A549 (cell line): ENCODE measurements at regions of chr10 and their contacts with region 1.

Region 1: GRCh38 chr10:125719146-125720001 is at the start of gene EDRF1:
- DNase-seq: peak; percentile 91 to 99
- ATAC-seq: peak; percentile 96 to 97
- H3K4me3 ChIP-seq: peak within 1 kb of the TSS; percentile 84
- H3K27ac ChIP-seq: peak within 1 kb of the TSS; percentile 88 to 95
- H3K4me1 ChIP-seq: peaks cover 11% of the 10 kb centered on the region; the same call in 2 of the 3 replicates
- CTCF ChIP-seq: no peak
- EP300 ChIP-seq: no peak
- POLR2A ChIP-seq: peak; percentile 96
- RAD21 ChIP-seq: no peak
- polyA plus RNA-seq, gene EDRF1: 31.1 and 37.9 TPM in 2 replicates

Region 2: GRCh38 chr10:125707541-125708468 is 11.6 kb before region 1 on chr10:
- CTCF ChIA-PET with region 1: no interaction called
- POLR2A ChIA-PET with region 1: interaction called, 20 read pairs
- DNase-seq: peak; percentile 50 to 80
- ATAC-seq: peak; percentile 87 to 96
- H3K4me3 ChIP-seq: no peak overlapping the region
- H3K27ac ChIP-seq: peak overlapping the region; percentile 58 to 76; a peak in 5 of 6 replicates
- H3K4me1 ChIP-seq: peaks cover 27% of the 10 kb centered on the region
- CTCF ChIP-seq: no peak
- EP300 ChIP-seq: no peak
- POLR2A ChIP-seq: no peak
- RAD21 ChIP-seq: no peak

Region 3: DNA sequence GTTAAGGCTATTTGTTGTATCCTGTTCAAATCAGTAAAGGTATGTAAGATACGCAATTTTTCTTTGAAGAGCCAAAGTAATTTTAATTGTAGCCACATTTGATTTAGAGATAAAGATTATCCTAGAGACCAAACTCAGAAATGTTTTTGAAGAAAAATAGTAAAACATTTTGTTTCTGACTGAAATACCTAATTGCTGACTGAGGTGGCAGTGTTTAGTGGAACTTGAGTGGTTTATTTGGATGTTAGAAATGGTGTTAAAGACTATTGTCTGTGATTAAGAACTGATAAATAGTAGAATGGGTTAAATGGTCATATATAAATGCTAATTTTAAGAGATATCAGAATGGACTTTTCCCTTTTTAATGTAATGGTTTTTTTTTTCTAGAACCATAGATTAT is 15.4 kb after region 1 on chr10:
- CTCF ChIA-PET with region 1: no interaction called
- POLR2A ChIA-PET with region 1: interaction called, 16 read pairs
- DNase-seq: no peak
- ATAC-seq: no peak
- H3K4me3 ChIP-seq: no peak overlapping the region
- H3K27ac ChIP-seq: no peak overlapping the region
- H3K4me1 ChIP-seq: no peaks in the 10 kb centered on the region
- CTCF ChIP-seq: no peak
- EP300 ChIP-seq: no peak
- POLR2A ChIP-seq: no peak
- RAD21 ChIP-seq: no peak

Region 4: DNA sequence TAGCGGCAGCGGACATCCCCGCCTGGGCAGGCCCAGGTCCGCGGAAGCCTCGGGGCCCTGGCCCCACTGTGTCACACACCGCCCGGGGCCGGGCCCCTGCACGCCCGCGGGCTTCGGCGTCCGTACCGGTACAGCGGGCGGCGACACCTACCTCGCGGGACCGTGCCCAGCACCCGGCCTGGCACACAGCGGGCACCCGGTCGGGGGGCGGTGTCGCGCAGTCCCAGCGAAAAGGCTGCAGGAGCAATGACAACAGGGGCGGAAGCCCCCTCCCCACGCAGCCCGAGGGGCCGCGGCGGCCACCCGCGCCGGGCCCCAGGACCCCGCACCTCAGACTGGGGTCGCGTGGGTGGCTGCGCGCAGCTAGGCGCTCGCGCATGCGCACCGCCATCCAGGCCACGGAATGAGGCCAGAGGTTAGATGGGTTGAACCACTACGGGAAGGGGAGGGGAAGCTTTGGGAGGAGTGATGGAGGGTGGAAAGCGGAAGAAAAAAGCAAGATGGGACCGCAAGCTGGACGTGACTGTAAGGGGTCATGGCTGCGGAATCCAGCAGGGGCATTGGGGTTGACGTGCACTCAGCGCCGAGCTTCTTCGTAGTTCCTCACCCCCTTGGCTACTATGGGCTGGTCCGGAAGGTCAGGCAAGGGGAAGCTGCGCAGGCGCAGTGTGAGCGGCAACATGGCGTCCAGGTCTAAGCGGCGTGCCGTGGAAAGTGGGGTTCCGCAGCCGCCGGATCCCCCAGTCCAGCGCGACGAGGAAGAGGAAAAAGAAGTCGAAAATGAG is 103.7 kb after region 1 on chr10 and contains the starts of genes BCCIP and UROS:
- CTCF ChIA-PET with region 1: no interaction called
- POLR2A ChIA-PET with region 1: interaction called, 11 read pairs
- DNase-seq: peak; percentile 88 to 93
- ATAC-seq: peak; percentile 85 to 89
- H3K4me3 ChIP-seq: peak within 1 kb of the TSS; percentile 88
- H3K27ac ChIP-seq: peak within 1 kb of the TSS; percentile 99
- H3K4me1 ChIP-seq: peaks cover 25% of the 10 kb centered on the region
- CTCF ChIP-seq: no peak
- EP300 ChIP-seq: no peak
- POLR2A ChIP-seq: peak; percentile 86
- RAD21 ChIP-seq: no peak
- polyA plus RNA-seq, gene BCCIP: 74.0 and 130 TPM in 2 replicates
- polyA plus RNA-seq, gene UROS: 53.6 and 71.1 TPM in 2 replicates